WTC11 (cell line): ENCODE measurements at regions of chr2 and their contacts with region 1.

Region 1: GRCh38 chr2:24084386-24085361 is at the start of gene TP53I3:
- DNase-seq: peak; percentile 94
- ATAC-seq: peak; percentile 85
- H3K4me3 Mint-ChIP-seq: peak within 1 kb of the TSS; percentile 89
- H3K27ac Mint-ChIP-seq: peak within 1 kb of the TSS; percentile 98
- H3K4me1 Mint-ChIP-seq: peaks cover 20% of the 10 kb centered on the region
- H3K27me3 Mint-ChIP-seq: no peaks in the 10 kb centered on the region
- CTCF ChIP-seq: peak; percentile 96
- total RNA-seq, gene TP53I3: 29.7 to 33.1 TPM (median 32.9 TPM) in 3 replicates

Region 2: GRCh38 chr2:23824777-23825212 is 259.9 kb before region 1 on chr2:
- CTCF ChIA-PET with region 1: interaction called, 15 read pairs
- POLR2A ChIA-PET with region 1: no interaction called
- DNase-seq: no peak
- ATAC-seq: peak; percentile 52
- H3K4me3 Mint-ChIP-seq: no peak overlapping the region
- H3K27ac Mint-ChIP-seq: no peak overlapping the region
- H3K4me1 Mint-ChIP-seq: no peaks in the 10 kb centered on the region
- H3K27me3 Mint-ChIP-seq: no peaks in the 10 kb centered on the region
- CTCF ChIP-seq: peak; percentile 54

Region 3: DNA sequence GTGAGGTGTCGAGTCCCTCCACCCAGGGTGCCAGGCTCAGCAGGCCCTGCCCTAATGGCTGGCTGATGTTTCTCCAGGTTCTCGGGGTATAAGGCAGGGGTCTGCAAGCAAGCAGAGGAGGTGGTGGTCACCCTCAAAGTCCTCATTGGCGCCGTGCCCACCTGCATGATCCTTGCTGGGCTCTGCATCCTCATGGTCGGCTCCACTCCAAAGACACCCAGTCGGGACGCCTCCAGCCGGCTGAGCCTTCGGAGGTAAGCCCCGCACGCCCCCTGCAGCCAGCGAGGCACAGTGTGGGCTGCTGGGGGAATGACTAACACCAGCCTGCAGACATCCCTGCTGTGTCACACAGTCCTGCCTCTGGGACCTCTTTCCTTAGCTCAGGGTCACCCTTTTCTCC is 60.7 kb before region 1 on chr2:
- CTCF ChIA-PET with region 1: interaction called, 19 read pairs
- POLR2A ChIA-PET with region 1: interaction called, 5 read pairs
- DNase-seq: peak; percentile 43
- ATAC-seq: peak; percentile 17
- H3K4me3 Mint-ChIP-seq: no peak overlapping the region
- H3K27ac Mint-ChIP-seq: peak overlapping the region; percentile 96
- H3K4me1 Mint-ChIP-seq: peaks cover 59% of the 10 kb centered on the region
- H3K27me3 Mint-ChIP-seq: no peaks in the 10 kb centered on the region
- CTCF ChIP-seq: no peak

Region 4: DNA sequence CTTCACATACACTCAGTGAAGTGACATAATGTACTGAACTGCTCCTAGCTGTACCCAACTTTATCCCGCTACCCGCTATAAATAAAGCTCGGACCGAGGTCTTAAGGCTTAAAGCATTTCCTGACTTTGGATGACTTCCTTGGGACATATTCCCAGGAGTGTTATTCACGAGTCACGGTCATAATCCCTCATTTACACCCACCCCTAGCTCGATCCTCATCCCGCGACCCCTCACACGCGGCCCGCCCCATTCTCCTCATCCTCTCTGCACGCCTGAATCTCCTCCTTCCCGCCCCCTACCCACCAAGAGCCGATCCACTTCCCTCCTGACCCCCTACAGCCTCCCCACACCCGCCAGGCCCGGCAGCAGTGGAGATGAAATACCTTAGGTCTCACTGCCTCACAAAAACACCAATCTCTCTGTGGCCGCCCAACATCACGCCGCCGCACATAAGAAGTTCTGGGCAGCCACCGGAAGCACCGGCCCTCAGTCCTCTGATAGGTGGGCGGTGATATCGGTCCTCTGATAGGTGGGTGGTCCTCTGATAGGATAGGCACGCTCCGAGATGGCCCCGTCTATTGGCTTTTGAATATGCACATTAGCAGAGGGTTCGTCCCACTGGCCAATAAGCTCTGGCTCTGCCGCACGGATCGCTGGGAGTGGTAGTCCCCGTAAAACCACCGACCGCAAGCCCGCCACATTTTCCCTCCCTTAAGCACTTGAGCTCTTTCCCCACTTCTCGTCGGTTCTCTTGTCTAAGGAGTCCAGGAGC is 37.6 kb before region 1 on chr2 and contains the start of gene WDCP:
- CTCF ChIA-PET with region 1: interaction called, 17 read pairs
- POLR2A ChIA-PET with region 1: interaction called, 12 read pairs
- DNase-seq: peak; percentile 94
- ATAC-seq: peak; percentile 93
- H3K4me3 Mint-ChIP-seq: peak within 1 kb of the TSS; percentile 97
- H3K27ac Mint-ChIP-seq: peak within 1 kb of the TSS; percentile 92
- H3K4me1 Mint-ChIP-seq: peaks cover 26% of the 10 kb centered on the region
- H3K27me3 Mint-ChIP-seq: no peaks in the 10 kb centered on the region
- CTCF ChIP-seq: no peak
- total RNA-seq, gene WDCP: 30.5 to 33.6 TPM (median 31.9 TPM) in 3 replicates

Region 5: DNA sequence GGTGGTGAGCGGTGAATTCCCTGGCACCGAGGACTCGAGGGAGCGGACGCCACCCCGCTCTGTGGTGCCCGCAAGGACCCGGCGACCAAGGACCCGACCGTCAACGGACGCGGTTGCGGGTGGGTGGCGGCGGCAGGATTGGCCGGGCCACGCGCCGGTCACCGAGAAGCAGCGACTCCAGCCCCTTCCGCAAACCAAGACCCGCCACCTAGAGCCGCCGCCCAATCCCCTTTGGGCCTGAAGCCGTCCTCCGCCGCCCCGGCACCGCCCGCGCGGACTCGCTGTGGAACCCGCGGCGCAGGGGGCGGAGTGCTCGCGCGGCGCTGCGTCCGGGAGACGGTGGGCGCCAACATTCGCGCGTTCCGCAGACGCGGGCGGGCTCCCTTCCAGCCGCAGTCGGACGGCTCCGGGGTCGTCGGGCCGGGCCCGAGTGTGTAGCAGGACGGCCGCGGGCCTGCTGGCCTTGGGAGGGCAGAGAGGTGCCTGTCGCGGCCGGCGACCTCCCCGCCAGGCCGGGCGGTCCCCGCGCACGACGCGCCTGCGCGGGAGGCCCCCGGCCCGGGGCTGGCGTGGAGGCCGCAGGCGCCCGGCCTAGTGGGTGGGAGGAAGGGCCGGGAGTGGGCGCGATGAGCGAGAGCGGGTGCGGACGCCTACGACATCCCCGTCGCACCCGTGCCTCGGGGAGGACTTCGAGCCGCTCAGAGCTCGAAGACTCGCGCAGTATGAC is 38.7 kb after region 1 on chr2 and contains the starts of genes FAM228B and PFN4:
- CTCF ChIA-PET with region 1: interaction called, 64 read pairs
- POLR2A ChIA-PET with region 1: interaction called, 13 read pairs
- DNase-seq: peak; percentile 73
- ATAC-seq: peak; percentile 84
- H3K4me3 Mint-ChIP-seq: peak within 1 kb of the TSS; percentile 78
- H3K27ac Mint-ChIP-seq: 0 out of 2 replicates have a peak within 1 kb of the TSS, but pooled peaks have one; percentile 28
- H3K4me1 Mint-ChIP-seq: peaks cover 24% of the 10 kb centered on the region
- H3K27me3 Mint-ChIP-seq: peaks cover 29% of the 10 kb centered on the region
- CTCF ChIP-seq: no peak
- total RNA-seq, gene FAM228B: 2.7 to 7.4 TPM (median 6.9 TPM) in 3 replicates
- total RNA-seq, gene PFN4: 0.48 TPM in 1 of 3 replicates, not detected in the others

Region 6: GRCh38 chr2:24164125-24164973 is 79.7 kb after region 1 on chr2:
- CTCF ChIA-PET with region 1: interaction called, 18 read pairs
- POLR2A ChIA-PET with region 1: interaction called, 3 read pairs
- DNase-seq: peak; percentile 73
- ATAC-seq: peak; percentile 86
- H3K4me3 Mint-ChIP-seq: no peak overlapping the region
- H3K27ac Mint-ChIP-seq: no peak overlapping the region
- H3K4me1 Mint-ChIP-seq: peaks cover 4% of the 10 kb centered on the region; the same call in 1 of the 2 replicates
- H3K27me3 Mint-ChIP-seq: no peaks in the 10 kb centered on the region; the same call in 1 of the 2 replicates
- CTCF ChIP-seq: peak; percentile 51; the same call in 1 of the 2 replicates

Region 7: DNA sequence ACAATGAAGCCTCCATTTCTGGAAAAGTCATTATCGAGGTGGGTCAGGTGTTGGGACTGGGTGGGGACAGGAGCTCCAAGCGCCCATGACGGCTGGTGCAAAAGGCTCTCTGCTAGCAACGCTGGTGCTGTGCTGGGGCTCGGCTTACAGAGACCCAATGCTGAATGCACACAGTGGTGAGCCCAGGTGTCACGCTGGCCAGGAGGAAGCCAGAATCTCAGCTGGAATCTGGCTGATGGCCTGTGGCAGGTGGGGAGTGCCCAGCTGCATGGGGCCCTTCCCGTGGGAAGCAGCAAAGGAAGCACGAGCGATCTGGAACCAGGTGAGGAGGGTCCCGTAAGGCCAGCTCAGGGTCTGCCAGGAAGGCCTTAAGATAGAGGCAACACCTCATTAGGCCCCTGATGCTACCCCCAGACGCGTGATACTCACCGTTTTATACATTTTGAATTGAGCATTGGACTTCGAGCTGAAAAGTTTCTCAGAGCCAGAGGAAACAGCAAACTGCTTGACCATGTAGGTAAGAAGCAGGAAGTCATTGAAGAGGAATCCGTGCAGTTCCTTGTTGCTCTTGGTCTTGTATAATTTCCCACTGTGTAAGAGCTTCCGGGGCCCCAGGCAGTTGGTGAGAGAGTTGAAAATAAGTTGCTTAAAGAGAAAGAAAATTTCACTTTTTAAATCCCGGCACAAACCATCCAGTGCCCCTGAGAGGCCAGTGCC is 124.9 kb after region 1 on chr2:
- CTCF ChIA-PET with region 1: interaction called, 12 read pairs
- POLR2A ChIA-PET with region 1: no interaction called
- DNase-seq: no peak
- ATAC-seq: no peak
- H3K4me3 Mint-ChIP-seq: no peak overlapping the region
- H3K27ac Mint-ChIP-seq: no peak overlapping the region
- H3K4me1 Mint-ChIP-seq: 0 out of 2 replicates have a peak, but pooled peaks cover 3% of the 10 kb centered on the region
- H3K27me3 Mint-ChIP-seq: no peaks in the 10 kb centered on the region
- CTCF ChIP-seq: no peak

Region 8: GRCh38 chr2:24461685-24462084 is 377.0 kb after region 1 on chr2:
- CTCF ChIA-PET with region 1: no interaction called
- POLR2A ChIA-PET with region 1: no interaction called
- DNase-seq: no peak
- ATAC-seq: peak; percentile 43
- H3K4me3 Mint-ChIP-seq: no peak overlapping the region
- H3K27ac Mint-ChIP-seq: no peak overlapping the region
- H3K4me1 Mint-ChIP-seq: peaks cover 12% of the 10 kb centered on the region
- H3K27me3 Mint-ChIP-seq: no peaks in the 10 kb centered on the region; the same call in 1 of the 2 replicates
- CTCF ChIP-seq: no peak